ENCODE measurements at regions of chr1 and their contacts with region 1.

Region 1: GRCh38 chr1:116330245-116330629 is 42.8 kb upstream of the ATP1A1 start:
- DNase-seq: peak in 1 of 2 experiments; percentile 95
- H3K4me3 ChIP-seq: peak overlapping the region; percentile 32
- H3K27ac ChIP-seq: peak overlapping the region; percentile 87
- H3K4me1 ChIP-seq: peaks cover 78% of the 10 kb centered on the region
- H3K27me3 ChIP-seq: no peaks in the 10 kb centered on the region
- CTCF ChIP-seq: no peak

Region 2: GRCh38 chr1:116194568-116195474 is 135.4 kb before region 1 on chr1:
- CTCF ChIA-PET with region 1: no interaction called
- POLR2A ChIA-PET with region 1: interaction called, 10 read pairs
- intact Hi-C with region 1: no loop called
- DNase-seq: peak in 1 of 2 experiments; percentile 74
- H3K4me3 ChIP-seq: peak overlapping the region; percentile 1; the same call in 1 of the 2 replicates
- H3K27ac ChIP-seq: peak overlapping the region; percentile 38
- H3K4me1 ChIP-seq: peaks cover 20% of the 10 kb centered on the region
- H3K27me3 ChIP-seq: no peaks in the 10 kb centered on the region
- CTCF ChIP-seq: no peak

Region 3: GRCh38 chr1:116292929-116293725 is 37.1 kb before region 1 on chr1:
- CTCF ChIA-PET with region 1: no interaction called
- POLR2A ChIA-PET with region 1: no interaction called
- intact Hi-C with region 1: no loop called
- DNase-seq: no peak
- H3K4me3 ChIP-seq: no peak overlapping the region
- H3K27ac ChIP-seq: no peak overlapping the region
- H3K4me1 ChIP-seq: peaks cover 42% of the 10 kb centered on the region
- H3K27me3 ChIP-seq: no peaks in the 10 kb centered on the region
- CTCF ChIP-seq: no peak

Region 4: DNA sequence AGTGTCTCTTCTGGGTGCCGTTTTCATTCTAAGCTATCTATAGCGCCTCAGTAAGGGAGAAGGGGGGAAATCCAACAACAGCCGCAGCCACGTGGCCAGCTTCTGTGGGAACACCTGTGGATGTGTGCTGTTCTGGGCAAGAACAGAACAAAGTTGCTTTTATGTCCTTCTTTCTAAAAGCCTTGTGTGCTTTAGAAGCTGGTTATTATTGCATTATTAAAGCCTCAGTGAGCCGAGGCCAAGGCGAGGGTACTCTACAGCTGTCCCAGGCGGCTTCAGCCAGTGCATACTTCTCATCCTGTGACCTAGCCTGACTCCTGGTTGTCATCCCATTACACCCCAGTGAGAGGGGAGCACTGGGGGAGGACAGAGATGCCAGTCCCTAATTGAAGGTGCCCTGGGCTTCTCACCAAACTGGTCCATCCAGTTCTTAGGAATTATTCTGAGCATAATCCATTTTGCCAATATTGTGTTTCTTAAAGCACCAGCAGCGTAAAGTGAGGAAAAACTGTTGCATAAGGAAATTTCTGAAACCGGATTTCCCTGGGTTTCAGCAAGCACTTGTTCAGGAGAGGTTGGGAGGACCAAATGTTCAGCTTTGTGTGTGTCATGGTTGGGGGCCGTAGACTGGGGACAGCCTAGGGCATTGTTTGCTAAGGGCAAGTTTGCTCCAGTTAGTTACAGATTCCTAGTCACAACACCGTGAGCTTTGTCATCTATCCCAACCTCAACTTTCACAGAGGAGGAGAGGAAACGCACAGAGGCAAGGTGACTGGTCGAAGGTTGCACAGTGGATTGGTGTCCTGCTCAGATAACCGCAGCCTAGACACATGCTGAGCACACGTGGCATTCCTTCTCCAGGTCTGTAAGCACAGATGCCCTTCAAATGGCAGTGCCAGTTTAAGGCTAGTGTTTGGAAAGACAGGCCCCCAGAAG is 18.2 kb before region 1 on chr1:
- CTCF ChIA-PET with region 1: no interaction called
- POLR2A ChIA-PET with region 1: no interaction called
- intact Hi-C with region 1: loop called (anchors 1 kb)
- DNase-seq: peak; percentile 65 to 100
- H3K4me3 ChIP-seq: peak overlapping the region; percentile 3; the same call in 1 of the 2 replicates
- H3K27ac ChIP-seq: peak overlapping the region; percentile 88
- H3K4me1 ChIP-seq: peaks cover 65% of the 10 kb centered on the region
- H3K27me3 ChIP-seq: no peaks in the 10 kb centered on the region
- CTCF ChIP-seq: no peak

Measured in PC-9 (cell line).